Esophagus muscularis mucosa (tissue), 4 donors: ENCODE measurements at regions of chr3 and their contacts with region 1.

Region 1: GRCh38 chr3:107235928-107236315 is 141.3 kb upstream of the CCDC54 start:
- DNase-seq: no peak
- H3K4me3 ChIP-seq: peak overlapping the region; percentile 53 to 62 (median 58)
- H3K27ac ChIP-seq: peak overlapping the region; percentile 43 to 71 (median 66)
- H3K4me1 ChIP-seq: peaks cover 0 to 36% (median 27%) of the 10 kb centered on the region in 4 donors
- H3K27me3 ChIP-seq: no peaks in the 10 kb centered on the region
- CTCF ChIP-seq: peak; percentile 89 to 93 (median 91)
- EP300 ChIP-seq: no peak
- POLR2A ChIP-seq: no peak

Region 2: DNA sequence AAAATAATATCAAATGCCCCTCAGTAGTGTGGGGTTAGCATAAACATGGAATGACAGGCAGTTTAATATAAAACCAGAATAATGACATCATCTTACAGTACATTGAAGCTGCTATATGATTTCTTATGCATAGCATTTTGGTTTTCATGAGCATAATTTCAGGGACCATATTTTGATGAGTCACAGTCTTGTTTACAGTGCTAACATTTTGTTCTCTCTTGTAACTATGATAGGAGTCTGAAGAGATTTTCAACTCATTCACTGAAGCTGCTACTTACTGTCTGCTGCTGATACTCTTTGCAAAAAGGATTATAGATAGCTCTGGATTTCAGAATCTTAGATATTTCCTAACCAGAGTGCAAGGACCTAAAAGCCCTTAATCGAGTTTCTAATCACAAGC is 48.7 kb after region 1 on chr3:
- intact Hi-C with region 1: no loop called
- DNase-seq: no peak
- H3K4me3 ChIP-seq: no peak overlapping the region
- H3K27ac ChIP-seq: no peak overlapping the region
- H3K4me1 ChIP-seq: peaks cover 0 to 9% (median 0%) of the 10 kb centered on the region in 4 donors
- H3K27me3 ChIP-seq: no peaks in the 10 kb centered on the region
- CTCF ChIP-seq: no peak
- EP300 ChIP-seq: no peak
- POLR2A ChIP-seq: no peak

Region 3: GRCh38 chr3:107392549-107393165 is 156.7 kb after region 1 on chr3:
- intact Hi-C with region 1: no loop called
- DNase-seq: no peak
- H3K4me3 ChIP-seq: no peak overlapping the region
- H3K27ac ChIP-seq: no peak overlapping the region
- H3K4me1 ChIP-seq: no peaks in the 10 kb centered on the region
- H3K27me3 ChIP-seq: no peaks in the 10 kb centered on the region
- CTCF ChIP-seq: no peak
- EP300 ChIP-seq: no peak
- POLR2A ChIP-seq: no peak

Region 4: DNA sequence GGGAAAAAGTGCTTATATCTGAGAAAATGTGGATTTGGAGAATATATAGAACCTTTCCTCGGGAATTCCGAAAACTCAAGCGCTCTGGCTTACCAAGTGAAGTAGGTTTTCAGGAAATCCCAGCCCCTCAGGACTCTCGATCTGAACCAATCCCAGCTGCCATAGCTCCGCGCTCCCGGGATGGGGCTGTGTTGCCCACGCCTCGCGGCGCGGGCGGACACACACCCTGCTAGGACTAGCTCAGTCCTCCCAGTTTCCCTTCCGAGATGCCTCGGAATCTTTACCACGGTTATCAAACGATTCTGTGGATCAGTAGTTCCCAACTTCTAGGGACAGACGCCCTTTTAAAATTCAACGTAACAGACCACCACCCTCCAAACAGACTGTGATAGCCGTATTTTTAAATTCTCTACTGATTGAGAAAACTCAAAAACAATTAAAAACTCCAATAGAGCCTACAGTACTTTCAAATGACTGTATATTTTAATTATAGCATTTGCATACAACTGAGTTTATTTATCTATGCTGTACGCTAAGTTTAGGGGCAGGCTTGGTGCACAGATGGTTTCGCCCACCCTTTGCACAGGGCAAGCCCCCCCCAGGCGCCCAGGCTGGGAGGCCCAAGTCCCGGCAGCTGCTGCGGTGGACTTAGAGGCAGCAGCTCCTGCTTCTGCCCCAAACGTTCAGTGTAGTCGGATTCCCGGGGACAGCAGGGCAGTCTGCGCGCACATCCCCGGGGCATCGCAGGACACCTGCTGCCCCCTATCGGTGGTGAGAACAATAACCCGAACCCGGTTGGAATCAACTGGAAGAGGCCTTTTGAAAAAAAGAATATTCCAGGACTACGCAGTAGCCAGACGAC is 193.6 kb after region 1 on chr3:
- intact Hi-C with region 1: loop called (anchors 5 kb)
- DNase-seq: no peak
- H3K4me3 ChIP-seq: peak overlapping the region; percentile 80 to 96 (median 87)
- H3K27ac ChIP-seq: peak overlapping the region; percentile 97 to 99 (median 97)
- H3K4me1 ChIP-seq: peaks cover 5 to 26% (median 18%) of the 10 kb centered on the region in 4 donors
- H3K27me3 ChIP-seq: no peaks in the 10 kb centered on the region
- CTCF ChIP-seq: peak; percentile 73 to 89 (median 88)
- EP300 ChIP-seq: no peak
- POLR2A ChIP-seq: no peak

Region 5: DNA sequence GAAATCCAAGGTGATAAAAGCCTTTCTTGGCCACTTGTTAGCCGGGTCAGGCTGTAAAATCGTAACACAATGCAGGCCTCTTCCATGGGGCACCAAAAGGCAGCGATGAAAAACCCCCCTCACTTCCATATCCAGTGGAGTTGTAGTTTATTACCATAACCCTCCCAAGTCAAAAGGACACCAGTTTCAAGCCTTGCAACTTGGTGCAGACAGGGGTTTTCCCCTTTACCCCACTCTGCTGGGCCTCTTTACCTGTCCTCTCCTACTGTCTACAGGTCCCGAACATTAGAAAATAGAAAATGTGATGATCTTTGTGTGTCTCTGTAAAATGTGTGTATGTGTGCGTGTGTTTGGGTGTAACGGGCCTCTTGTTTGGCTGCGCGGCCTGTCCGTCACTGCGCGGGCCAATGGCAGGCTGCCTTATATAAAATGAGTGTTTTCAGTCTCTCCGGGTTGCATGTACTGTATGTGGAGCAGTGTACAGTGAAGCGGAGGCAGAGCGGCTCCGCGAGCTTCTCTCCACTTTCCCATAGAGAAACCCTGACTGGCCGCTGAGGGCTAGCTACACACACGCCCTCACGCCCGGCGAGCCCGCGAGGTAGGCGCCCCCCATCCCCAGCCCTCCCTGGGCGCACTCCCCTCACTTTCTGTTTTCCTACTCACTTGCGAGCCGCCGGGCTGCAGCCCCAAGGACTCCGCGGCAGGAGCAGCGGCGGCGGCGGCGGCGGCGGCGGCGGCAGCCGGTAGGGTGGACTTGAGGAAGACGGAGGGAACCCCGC is 286.8 kb after region 1 on chr3 and contains the start of gene BBX:
- intact Hi-C with region 1: loop called (anchors 5 kb)
- DNase-seq: peak; percentile 99
- H3K4me3 ChIP-seq: peak within 1 kb of the TSS; percentile 76 to 95 (median 86)
- H3K27ac ChIP-seq: peak within 1 kb of the TSS; percentile 90 to 97 (median 94)
- H3K4me1 ChIP-seq: peaks cover 9 to 24% (median 20%) of the 10 kb centered on the region in 4 donors
- H3K27me3 ChIP-seq: no peaks in the 10 kb centered on the region
- CTCF ChIP-seq: no peak
- EP300 ChIP-seq: no peak
- POLR2A ChIP-seq: peak; percentile 51
- total RNA-seq, gene BBX: 49.2 to 78.9 (median 77.9) TPM

Region 6: DNA sequence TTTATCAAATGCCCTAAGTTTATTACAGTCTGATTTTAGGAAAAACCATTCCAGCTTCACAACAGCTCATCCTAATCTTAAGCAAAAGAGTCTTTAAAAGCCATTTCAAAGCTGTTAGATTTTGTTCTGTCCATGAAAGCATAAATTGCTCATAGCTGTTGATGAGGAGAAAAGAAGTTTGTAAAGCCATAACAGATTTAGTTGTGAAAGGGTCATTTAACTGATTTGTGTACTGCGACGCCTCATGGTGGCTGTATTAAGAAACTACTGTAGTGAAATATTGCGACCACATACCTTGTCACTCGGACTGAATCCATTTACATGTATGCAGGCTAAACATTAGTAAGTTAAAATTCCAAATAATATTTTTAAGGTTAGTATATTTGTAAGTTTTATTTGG is 307.7 kb after region 1 on chr3:
- intact Hi-C with region 1: loop called (anchors 10 kb)
- DNase-seq: no peak
- H3K4me3 ChIP-seq: no peak overlapping the region
- H3K27ac ChIP-seq: no peak overlapping the region
- H3K4me1 ChIP-seq: peaks cover 0 to 13% (median 0%) of the 10 kb centered on the region in 4 donors
- H3K27me3 ChIP-seq: no peaks in the 10 kb centered on the region
- CTCF ChIP-seq: peak in 2 of 3 experiments; percentile 23 to 30
- EP300 ChIP-seq: no peak
- POLR2A ChIP-seq: no peak

Region 7: DNA sequence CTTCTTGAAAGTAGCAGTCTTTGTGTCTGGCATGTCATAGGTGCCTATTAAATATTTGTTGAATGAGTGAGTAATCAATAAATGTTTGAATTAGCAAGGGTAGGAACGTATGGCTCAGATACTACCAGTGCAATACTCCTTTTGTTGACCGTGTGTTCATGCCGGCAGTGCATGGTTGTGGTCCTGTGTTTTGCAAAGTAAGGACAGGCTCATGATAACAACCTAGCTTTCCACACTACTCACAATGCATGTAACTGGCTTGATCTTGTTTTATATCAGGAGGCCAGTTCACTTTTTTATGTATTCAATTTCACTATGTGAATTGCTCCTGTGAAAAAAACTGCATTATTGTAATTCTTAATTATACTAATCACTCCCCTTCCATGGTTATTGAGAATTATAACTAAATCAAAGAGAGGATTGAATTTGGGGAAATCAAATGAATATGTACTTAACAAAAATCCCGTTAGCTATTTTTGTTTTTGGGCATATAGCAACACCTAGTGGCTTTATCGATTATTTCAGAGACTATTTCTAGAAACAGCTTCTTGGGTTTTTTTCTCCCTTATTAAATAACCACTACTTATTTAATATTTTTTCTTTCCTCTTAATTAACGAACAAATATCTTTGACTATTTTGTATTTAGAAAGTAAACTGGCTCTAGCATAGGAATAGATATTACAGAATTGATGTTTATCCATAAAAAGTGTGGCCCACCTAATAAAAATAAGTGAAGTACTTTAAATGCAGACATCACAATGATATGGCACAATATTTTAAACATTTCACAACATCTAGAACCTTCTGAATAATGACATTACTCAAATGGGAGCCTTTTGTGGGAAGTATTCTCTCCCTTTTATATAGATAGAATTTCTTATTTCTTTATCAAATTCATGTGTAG is 505.3 kb after region 1 on chr3:
- intact Hi-C with region 1: loop called (anchors 10 kb)
- DNase-seq: no peak
- H3K4me3 ChIP-seq: no peak overlapping the region
- H3K27ac ChIP-seq: no peak overlapping the region
- H3K4me1 ChIP-seq: no peaks in the 10 kb centered on the region
- H3K27me3 ChIP-seq: no peaks in the 10 kb centered on the region
- CTCF ChIP-seq: peak; percentile 56 to 58 (median 58)
- EP300 ChIP-seq: no peak
- POLR2A ChIP-seq: no peak

Region 8: GRCh38 chr3:107927361-107928083 is 691.6 kb after region 1 on chr3:
- intact Hi-C with region 1: loop called (anchors 5 kb)
- DNase-seq: no peak
- H3K4me3 ChIP-seq: peak overlapping the region; percentile 59 to 64 (median 61)
- H3K27ac ChIP-seq: peak overlapping the region in 3 of 4 donors; percentile 21 to 53 (median 31)
- H3K4me1 ChIP-seq: peaks cover 5 to 23% (median 19%) of the 10 kb centered on the region in 4 donors
- H3K27me3 ChIP-seq: no peaks in the 10 kb centered on the region
- CTCF ChIP-seq: peak; percentile 76 to 96 (median 93)
- EP300 ChIP-seq: no peak
- POLR2A ChIP-seq: no peak

Region 9: GRCh38 chr3:108477511-108478147 is 1241.7 kb after region 1 on chr3:
- intact Hi-C with region 1: loop called (anchors 5 kb)
- DNase-seq: no peak
- H3K4me3 ChIP-seq: no peak overlapping the region
- H3K27ac ChIP-seq: no peak overlapping the region
- H3K4me1 ChIP-seq: peaks cover 0 to 6% (median 0%) of the 10 kb centered on the region in 4 donors
- H3K27me3 ChIP-seq: no peaks in the 10 kb centered on the region
- CTCF ChIP-seq: peak; percentile 67 to 77 (median 67)
- EP300 ChIP-seq: no peak
- POLR2A ChIP-seq: no peak